ENCODE measurements at regions of chr21 and their contacts with region 1.

Region 1: DNA sequence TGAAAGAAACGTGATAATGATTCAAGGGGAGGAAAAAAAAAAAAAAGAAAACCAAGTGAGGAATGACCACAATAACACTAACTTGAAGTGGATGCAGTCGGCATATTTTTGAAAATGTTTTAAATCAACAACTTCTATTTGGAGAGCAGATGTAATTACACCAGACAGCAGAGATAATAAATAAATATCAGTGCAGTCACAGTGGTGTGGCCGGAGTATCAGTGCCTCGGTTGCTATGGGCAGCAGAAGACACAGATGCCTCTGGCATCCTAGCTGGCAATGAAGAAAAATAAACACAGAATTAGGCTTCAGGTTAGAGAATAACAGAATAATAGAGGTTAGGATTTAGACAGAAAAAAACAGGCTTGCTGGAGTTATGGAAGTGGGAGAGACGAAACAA is 888.3 kb downstream of the LTN1 start:
- DNase-seq: no peak
- ATAC-seq: no peak
- H3K4me3 ChIP-seq: no peak overlapping the region
- H3K4me3 Mint-ChIP-seq: no peak overlapping the region
- H3K27ac ChIP-seq: no peak overlapping the region
- H3K27ac Mint-ChIP-seq: no peak overlapping the region
- H3K4me1 ChIP-seq: no peaks in the 10 kb centered on the region
- H3K4me1 Mint-ChIP-seq: no peaks in the 10 kb centered on the region
- H3K27me3 ChIP-seq: no peaks in the 10 kb centered on the region
- H3K27me3 Mint-ChIP-seq: no peaks in the 10 kb centered on the region
- CTCF ChIP-seq: no peak

Region 2: DNA sequence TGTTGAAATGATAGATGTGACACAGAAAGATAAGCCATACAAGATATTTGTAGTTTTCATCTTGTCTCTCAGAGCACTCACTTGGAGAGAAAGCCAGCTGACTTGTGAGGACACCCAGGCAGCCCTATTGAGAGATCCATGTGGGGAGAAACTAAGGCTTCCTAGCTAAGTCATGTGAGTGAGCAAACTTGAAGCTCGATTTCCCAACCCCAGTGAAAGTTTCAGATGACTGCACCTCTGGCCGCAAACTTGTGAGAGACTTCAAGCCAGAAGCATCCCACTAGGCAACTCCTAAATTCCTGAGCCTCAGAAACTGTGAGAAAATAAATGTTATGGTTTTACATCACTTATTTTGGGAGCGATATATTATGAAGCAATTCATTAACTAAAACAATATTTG is 56.0 kb after region 1 on chr21:
- CTCF ChIA-PET with region 1: no interaction called
- POLR2A ChIA-PET with region 1: no interaction called
- intact Hi-C with region 1: loop called in 1 of 2 experiments (anchors 10 kb)
- DNase-seq: no peak
- ATAC-seq: no peak
- H3K4me3 ChIP-seq: no peak overlapping the region
- H3K4me3 Mint-ChIP-seq: no peak overlapping the region
- H3K27ac ChIP-seq: no peak overlapping the region
- H3K27ac Mint-ChIP-seq: no peak overlapping the region
- H3K4me1 ChIP-seq: no peaks in the 10 kb centered on the region
- H3K4me1 Mint-ChIP-seq: no peaks in the 10 kb centered on the region
- H3K27me3 ChIP-seq: no peaks in the 10 kb centered on the region
- H3K27me3 Mint-ChIP-seq: no peaks in the 10 kb centered on the region
- CTCF ChIP-seq: no peak